ENCODE measurements at regions of chr3 and their contacts with region 1.

Region 1: DNA sequence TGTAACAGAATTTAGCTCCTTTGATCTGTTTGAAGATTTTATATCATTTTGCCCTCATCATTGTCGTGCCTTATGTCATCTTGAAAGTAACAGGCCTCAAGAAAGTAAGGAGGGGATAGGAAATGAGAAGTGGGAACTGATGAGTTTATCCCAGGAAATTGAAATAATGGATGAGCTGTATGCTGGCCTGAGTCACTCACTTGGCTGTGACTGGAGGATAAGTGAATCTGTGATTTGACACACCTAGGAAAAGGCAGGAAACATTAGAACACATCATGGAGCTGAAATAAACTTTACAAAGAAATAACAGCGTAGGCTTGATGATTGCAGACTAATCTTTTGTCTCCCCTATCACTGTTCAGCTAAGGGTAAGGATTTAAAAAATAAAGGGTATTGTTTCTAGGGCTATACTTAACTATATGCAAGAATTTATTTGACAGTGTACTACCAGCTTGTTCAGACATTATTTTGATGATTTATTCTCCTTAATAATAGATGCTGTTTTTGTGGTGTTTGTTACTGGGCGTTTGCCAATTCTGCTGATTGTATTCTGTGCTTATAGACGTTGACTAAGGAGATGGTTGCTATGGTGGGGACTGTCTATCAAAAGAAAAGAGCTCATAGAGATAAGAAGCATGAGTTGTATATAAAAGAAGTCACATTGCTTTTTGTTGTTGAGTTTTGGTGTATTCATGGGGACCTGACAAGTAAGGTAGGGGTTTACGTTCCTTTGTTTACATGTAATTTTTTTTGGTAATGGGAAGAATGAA is 105.6 kb upstream of the ROPN1 start:
- DNase-seq: no peak
- ATAC-seq: peak in 3 of 4 donors; percentile 33 to 58 (median 33)
- H3K4me3 ChIP-seq: no peak overlapping the region
- H3K27ac ChIP-seq: peak overlapping the region in 1 of 12 donors; percentile 5
- H3K4me1 ChIP-seq: peaks cover 0 to 18% (median 6%) of the 10 kb centered on the region in 12 donors
- H3K27me3 ChIP-seq: no peaks in the 10 kb centered on the region
- CTCF ChIP-seq: no peak
- POLR2A ChIP-seq: no peak

Region 2: DNA sequence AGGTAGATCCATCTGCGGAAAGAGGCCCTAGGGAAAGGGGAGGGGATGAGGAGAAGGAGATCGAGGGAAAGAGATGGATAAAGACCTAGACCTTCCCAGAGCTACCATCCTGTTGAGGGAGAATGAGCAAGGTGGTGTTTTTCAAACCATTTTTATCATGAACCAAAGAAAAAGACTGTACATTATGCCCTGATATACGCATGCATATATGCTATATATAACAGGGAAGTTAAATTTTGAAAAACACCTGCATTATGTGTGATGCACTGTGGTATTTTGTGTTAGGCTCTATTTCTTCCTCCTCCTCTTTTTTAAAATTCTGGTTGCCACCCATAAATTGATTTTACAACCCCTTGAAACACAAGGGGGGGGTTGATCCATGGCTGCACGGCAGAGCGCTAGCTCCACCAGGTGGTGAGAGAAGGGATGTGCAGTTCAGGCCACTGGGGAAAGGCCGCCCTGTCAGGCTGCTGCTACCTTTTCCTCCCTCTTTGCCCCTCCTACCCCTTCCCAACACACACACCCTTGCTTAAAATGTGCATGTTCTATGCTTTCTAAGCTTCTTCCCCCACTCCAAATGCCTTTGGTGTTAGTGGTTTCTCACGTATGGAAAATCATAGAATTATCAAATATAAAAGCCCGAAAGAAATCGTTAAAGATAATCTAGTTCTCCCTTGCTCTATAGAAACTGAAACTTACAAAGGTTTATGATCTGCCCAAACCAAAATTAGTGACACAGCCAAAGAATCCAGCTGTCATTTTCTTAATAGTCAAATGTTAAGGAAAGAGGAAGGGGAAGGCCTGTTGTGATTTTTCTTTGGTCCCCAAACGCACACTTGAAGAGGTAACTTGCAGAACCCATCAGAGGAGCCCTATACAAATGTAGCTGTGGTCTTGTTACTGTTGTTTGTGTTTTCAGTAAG is 370.7 kb after region 1 on chr3:
- intact Hi-C with region 1: loop called in 1 of 10 experiments (anchors 10 kb)
- DNase-seq: peak; percentile 15 to 65 (median 28)
- ATAC-seq: peak; percentile 62 to 79 (median 74)
- H3K4me3 ChIP-seq: no peak overlapping the region
- H3K27ac ChIP-seq: no peak overlapping the region
- H3K4me1 ChIP-seq: no peaks in the 10 kb centered on the region
- H3K27me3 ChIP-seq: no peaks in the 10 kb centered on the region
- CTCF ChIP-seq: peak; percentile 84 to 98 (median 93)
- POLR2A ChIP-seq: no peak

Measured in heart left ventricle (tissue), 16 donors.